Esophagus muscularis mucosa (tissue), 4 donors: ENCODE measurements at regions of chr10 and their contacts with region 1.

Region 1: DNA sequence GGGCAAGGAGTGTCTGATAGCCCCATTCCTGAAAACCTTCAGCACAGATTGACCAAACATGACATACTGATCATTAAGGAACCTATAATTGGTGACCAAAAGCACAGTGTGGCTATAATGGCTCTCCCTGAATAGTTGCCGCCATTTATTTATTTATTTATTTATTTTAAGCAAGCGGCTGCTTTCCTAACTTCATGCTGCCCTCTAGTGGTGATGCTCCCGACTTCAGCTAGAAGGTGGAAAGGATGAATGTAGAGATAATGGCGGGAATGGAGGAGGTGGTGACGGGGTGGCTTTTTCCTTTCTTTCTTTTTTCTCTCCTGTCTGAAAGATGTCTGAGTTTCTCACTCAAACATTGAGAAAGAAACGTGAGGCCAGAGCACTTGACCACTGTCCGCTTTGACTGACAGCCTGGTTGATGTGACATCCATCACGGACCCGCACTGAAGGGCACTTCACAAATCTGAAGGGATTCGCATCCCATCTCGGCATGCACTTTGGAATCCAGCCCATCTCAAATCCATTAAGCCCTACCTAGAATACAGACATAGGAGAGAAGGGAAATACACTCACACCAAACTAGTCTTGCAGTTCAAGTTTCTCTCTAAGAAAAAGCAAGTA is 1090.1 kb downstream of the KCNMA1 start:
- DNase-seq: no peak
- H3K4me3 ChIP-seq: no peak overlapping the region
- H3K27ac ChIP-seq: no peak overlapping the region
- H3K4me1 ChIP-seq: peaks cover 3 to 16% (median 11%) of the 10 kb centered on the region in 4 donors
- H3K27me3 ChIP-seq: no peaks in the 10 kb centered on the region
- CTCF ChIP-seq: peak; percentile 83 to 90 (median 88)
- EP300 ChIP-seq: no peak
- POLR2A ChIP-seq: no peak

Region 2: GRCh38 chr10:76303682-76304316 is 243.7 kb before region 1 on chr10:
- intact Hi-C with region 1: loop called (anchors 10 kb)
- DNase-seq: peak; percentile 92
- H3K4me3 ChIP-seq: no peak overlapping the region
- H3K27ac ChIP-seq: peak overlapping the region in 1 of 4 donors; percentile 3
- H3K4me1 ChIP-seq: peaks cover 15 to 23% (median 19%) of the 10 kb centered on the region in 4 donors
- H3K27me3 ChIP-seq: no peaks in the 10 kb centered on the region
- CTCF ChIP-seq: peak; percentile 54 to 70 (median 67)
- EP300 ChIP-seq: no peak
- POLR2A ChIP-seq: no peak